Endothelial cell of umbilical vein (primary cell): ENCODE measurements at regions of chr11 and their contacts with region 1.

Region 1: GRCh38 chr11:62081378-62082291 is 42.2 kb upstream of the INCENP start:
- DNase-seq: peak; percentile 74
- H3K4me3 ChIP-seq: no peak overlapping the region
- H3K27ac ChIP-seq: no peak overlapping the region
- H3K4me1 ChIP-seq: no peaks in the 10 kb centered on the region
- H3K27me3 ChIP-seq: no peaks in the 10 kb centered on the region
- CTCF ChIP-seq: peak; percentile 79 to 87
- POLR2A ChIP-seq: no peak

Region 2: GRCh38 chr11:61602775-61603569 is 478.7 kb before region 1 on chr11:
- CTCF ChIA-PET with region 1: no interaction called
- POLR2A ChIA-PET with region 1: no interaction called
- dilution Hi-C with region 1: no loop called
- intact Hi-C with region 1: no loop called
- DNase-seq: no peak
- H3K4me3 ChIP-seq: no peak overlapping the region
- H3K27ac ChIP-seq: no peak overlapping the region
- H3K4me1 ChIP-seq: no peaks in the 10 kb centered on the region
- H3K27me3 ChIP-seq: peaks cover 0 to 3% of the 10 kb centered on the region in 2 experiments
- CTCF ChIP-seq: no peak
- POLR2A ChIP-seq: no peak

Region 3: DNA sequence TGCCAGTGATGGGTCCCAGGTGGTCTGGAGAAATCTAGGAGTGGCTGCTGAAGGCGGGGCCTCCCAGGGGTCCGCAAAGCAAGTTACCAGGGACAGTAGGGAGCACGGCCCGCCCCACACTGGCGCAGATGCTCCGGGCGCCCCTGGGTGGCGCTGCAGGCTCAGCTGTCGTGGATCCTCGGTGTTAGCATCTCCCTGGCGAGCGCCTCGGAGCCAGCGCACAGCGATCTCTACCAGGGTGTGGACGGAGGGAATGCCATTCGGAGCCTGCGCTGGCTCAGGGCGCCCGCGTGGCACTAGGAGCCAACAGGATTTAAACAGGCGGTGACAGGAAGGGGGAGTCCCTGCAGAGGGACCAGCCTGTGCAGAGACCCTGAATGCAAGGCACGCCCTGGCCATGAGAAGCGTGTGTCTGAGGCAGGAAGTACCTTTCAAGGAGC is 210.5 kb before region 1 on chr11:
- CTCF ChIA-PET with region 1: interaction called, 75 read pairs
- POLR2A ChIA-PET with region 1: no interaction called
- dilution Hi-C with region 1: no loop called
- intact Hi-C with region 1: loop called (anchors 1 kb)
- DNase-seq: peak; percentile 76
- H3K4me3 ChIP-seq: no peak overlapping the region
- H3K27ac ChIP-seq: no peak overlapping the region
- H3K4me1 ChIP-seq: peaks cover 12% of the 10 kb centered on the region
- H3K27me3 ChIP-seq: no peaks in the 10 kb centered on the region
- CTCF ChIP-seq: peak; percentile 95 to 99
- POLR2A ChIP-seq: no peak

Region 4: DNA sequence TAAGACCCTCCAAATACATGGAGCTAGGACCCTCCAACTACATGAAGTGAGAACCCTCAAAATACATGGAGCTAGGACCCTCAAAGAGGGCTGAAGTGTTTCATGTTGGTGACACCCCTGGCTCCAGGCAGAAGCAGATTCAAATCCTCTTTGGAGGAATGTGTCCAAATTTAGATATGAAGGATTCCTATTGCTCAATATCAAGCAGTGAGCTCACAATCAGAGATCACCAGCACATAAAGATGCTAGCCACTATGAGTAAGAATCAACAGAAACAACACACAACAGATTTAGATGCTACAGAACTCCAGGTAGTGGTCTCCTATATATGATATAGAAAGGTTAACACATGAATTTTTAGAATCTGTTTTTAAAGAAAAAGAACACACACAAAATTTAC is 153.0 kb before region 1 on chr11:
- CTCF ChIA-PET with region 1: interaction called, 18 read pairs
- POLR2A ChIA-PET with region 1: no interaction called
- dilution Hi-C with region 1: no loop called
- intact Hi-C with region 1: no loop called
- DNase-seq: no peak
- H3K4me3 ChIP-seq: no peak overlapping the region
- H3K27ac ChIP-seq: no peak overlapping the region
- H3K4me1 ChIP-seq: no peaks in the 10 kb centered on the region
- H3K27me3 ChIP-seq: peaks cover 13 to 14% of the 10 kb centered on the region in 2 experiments
- CTCF ChIP-seq: no peak
- POLR2A ChIP-seq: no peak

Region 5: DNA sequence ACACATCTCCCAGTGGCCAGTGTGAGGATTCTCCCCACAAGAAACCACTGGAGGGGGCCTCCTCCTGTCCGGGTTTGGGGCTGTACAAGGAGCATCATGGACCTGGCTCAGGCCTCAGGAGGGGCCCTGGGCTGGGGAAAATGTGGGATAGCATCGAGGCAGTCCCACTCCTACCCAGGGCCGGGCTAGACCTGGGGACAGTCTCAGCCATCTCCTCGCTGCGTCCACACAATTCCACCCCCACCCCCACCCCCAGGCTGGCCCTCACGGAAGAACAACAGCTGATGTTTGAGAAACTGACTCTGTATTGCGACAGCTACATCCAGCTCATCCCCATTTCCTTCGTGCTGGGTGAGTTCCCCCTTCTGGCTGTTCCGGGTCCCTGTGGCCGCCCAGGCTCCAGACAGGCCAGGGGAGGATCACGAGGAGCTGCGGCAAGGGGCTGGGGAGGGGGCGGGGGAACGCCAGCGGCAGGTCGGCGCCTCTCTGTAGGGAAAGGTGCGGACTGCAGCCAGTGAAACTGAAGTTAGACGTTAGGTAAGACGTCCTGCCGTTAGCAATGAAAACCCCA is 126.7 kb before region 1 on chr11:
- CTCF ChIA-PET with region 1: interaction called, 254 read pairs
- POLR2A ChIA-PET with region 1: no interaction called
- dilution Hi-C with region 1: no loop called
- intact Hi-C with region 1: no loop called
- DNase-seq: no peak
- H3K4me3 ChIP-seq: no peak overlapping the region
- H3K27ac ChIP-seq: no peak overlapping the region
- H3K4me1 ChIP-seq: no peaks in the 10 kb centered on the region
- H3K27me3 ChIP-seq: peaks cover 5% of the 10 kb centered on the region in 2 experiments
- CTCF ChIP-seq: no peak
- POLR2A ChIP-seq: no peak

Region 6: DNA sequence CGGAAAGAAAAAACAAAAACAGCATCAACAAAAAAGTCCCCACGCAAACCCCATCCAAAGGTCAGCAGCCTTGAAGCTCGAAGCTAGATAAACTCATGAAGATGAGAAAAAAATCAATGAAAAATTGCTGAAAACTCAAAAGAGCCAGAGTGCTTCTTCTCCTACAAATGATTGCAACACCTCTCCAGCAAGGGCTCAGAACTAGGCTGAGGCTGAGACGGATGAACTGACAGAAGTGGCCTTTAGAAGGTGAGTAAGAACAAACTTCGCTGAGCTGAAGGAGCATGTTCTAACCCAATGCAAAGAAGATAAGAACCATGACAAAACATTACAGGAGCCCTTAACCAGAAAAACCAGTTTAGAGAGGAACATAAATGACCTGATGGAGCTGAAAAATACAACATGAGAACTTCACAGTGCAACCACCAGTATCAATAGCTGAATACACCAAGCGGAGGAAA is 95.7 kb before region 1 on chr11:
- CTCF ChIA-PET with region 1: interaction called, 10 read pairs
- POLR2A ChIA-PET with region 1: no interaction called
- dilution Hi-C with region 1: no loop called
- intact Hi-C with region 1: no loop called
- DNase-seq: no peak
- H3K4me3 ChIP-seq: no peak overlapping the region
- H3K27ac ChIP-seq: no peak overlapping the region
- H3K4me1 ChIP-seq: no peaks in the 10 kb centered on the region
- H3K27me3 ChIP-seq: peaks cover 3 to 12% of the 10 kb centered on the region in 2 experiments
- CTCF ChIP-seq: no peak
- POLR2A ChIP-seq: no peak

Region 7: DNA sequence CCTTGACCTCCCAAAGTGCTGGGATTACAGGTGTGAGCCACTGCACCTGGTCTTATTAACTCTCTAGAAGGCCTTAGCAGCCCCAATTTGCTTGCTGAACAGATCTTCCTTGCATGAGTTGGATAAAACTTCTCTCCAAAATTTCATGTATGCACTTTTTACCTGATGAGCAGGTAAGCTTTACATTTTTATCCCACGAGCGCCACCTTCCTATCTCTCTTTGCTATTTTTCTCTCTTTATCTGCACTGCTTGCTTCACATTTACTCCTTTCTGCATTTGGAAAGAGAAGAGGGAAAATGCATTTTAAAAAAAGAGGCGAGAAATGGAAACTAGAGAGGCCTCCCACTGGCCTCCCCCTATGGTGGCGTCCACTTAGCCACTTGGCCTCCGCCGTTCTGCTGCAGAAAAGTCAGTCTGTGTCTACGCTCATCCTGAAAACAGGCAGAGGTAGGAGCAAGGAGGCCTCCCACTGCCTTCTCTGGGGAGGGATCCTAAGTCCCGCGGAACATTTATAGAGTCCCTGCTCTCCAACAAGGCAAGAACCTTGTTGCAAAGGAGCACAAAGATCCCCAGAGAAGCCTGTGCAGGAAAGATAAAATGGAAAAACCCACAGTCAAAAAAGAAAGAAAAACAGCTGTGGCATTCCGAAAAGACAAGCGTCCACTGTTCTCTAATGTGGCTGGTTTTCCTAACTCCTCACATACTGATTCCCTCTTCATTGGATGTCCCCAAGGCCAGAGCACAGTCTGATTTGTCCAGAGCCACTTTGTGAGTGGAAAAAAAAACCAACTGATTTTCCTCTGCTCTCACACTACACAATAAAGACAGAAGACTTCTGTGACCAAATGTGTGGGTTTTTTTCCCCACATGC is 20.0 kb before region 1 on chr11:
- CTCF ChIA-PET with region 1: interaction called, 14 read pairs
- POLR2A ChIA-PET with region 1: no interaction called
- dilution Hi-C with region 1: no loop called
- intact Hi-C with region 1: no loop called
- DNase-seq: no peak
- H3K4me3 ChIP-seq: no peak overlapping the region
- H3K27ac ChIP-seq: no peak overlapping the region
- H3K4me1 ChIP-seq: no peaks in the 10 kb centered on the region
- H3K27me3 ChIP-seq: no peaks in the 10 kb centered on the region
- CTCF ChIP-seq: no peak
- POLR2A ChIP-seq: no peak